Common myeloid progenitor, CD34-positive (primary cell): ENCODE measurements at regions of chr5 and their contacts with region 1.

Region 1: DNA sequence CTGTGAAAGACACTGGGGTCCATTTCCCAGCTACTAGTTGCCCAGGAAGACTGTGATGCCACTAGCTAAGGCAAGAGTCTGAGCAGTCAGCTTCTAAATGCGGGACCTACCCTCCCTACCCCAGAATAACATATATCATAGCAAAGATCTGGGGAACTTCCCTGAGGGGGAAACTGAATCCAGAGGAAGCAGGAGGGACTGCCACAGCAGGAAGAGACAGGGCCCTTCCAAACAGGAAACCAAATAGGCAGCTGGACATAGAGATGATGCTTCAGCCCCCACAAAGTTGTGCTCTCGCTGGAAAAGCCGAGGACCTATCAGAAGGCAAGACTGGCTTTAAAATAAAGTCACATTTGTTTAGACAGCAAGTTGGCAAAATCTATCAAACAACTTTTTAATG is 51.1 kb downstream of the KLHL3 start:
- DNase-seq: peak in 2 of 3 donors; percentile 43 to 55
- H3K4me3 ChIP-seq: peak overlapping the region in 1 of 7 experiments; percentile 13
- H3K27ac ChIP-seq: no peak overlapping the region
- H3K4me1 ChIP-seq: peaks cover 0 to 8% (median 8%) of the 10 kb centered on the region in 4 experiments
- H3K27me3 ChIP-seq: no peaks in the 10 kb centered on the region

Region 2: DNA sequence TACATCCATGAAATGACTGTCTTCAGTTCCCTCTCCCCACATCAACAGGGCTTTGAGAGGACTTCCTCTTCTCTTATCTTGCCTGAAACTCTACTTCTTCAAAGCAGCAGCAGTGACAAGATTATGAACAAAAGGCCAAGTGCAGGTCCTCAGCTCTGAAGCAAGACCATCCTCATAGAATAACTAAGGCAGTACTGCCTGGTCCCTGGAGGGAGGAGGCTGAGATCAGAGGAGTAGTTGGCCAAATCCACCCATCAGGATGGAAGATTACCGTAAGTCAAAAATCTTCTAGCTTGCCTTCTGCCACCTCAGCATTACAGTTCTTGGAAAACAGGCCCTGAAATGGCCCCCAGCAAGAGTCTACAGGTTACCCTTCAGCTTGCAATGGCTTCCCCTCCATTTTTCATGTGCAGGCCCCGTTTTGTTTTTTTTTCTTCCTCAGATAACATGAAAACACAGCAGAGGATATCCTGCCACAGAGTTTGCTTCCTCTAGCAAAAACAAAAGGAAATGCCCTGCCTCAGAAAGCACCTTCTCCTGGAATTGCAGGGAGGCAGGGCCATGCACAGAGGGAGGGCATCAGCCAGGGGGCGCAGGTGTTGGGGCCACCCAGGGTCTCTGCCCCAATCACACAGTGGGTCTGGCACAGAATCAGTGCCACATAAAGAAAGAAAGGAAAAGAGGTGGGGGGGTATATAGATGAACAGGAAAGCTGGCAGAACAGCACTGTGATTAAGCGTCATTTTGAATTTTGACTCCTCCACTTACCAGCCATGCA is 11.1 kb after region 1 on chr5:
- CTCF ChIA-PET with region 1: interaction called, 24 read pairs
- POLR2A ChIA-PET with region 1: no interaction called
- DNase-seq: peak; percentile 54 to 92 (median 83)
- H3K4me3 ChIP-seq: peak overlapping the region in 3 of 7 experiments; percentile 15 to 29 (median 18)
- H3K27ac ChIP-seq: peak overlapping the region; percentile 18 to 65
- H3K4me1 ChIP-seq: peaks cover 18 to 68% (median 47%) of the 10 kb centered on the region in 4 experiments
- H3K27me3 ChIP-seq: no peaks in the 10 kb centered on the region